PC-9 (cell line): ENCODE measurements at regions of chr20 and their contacts with region 1.

Region 1: DNA sequence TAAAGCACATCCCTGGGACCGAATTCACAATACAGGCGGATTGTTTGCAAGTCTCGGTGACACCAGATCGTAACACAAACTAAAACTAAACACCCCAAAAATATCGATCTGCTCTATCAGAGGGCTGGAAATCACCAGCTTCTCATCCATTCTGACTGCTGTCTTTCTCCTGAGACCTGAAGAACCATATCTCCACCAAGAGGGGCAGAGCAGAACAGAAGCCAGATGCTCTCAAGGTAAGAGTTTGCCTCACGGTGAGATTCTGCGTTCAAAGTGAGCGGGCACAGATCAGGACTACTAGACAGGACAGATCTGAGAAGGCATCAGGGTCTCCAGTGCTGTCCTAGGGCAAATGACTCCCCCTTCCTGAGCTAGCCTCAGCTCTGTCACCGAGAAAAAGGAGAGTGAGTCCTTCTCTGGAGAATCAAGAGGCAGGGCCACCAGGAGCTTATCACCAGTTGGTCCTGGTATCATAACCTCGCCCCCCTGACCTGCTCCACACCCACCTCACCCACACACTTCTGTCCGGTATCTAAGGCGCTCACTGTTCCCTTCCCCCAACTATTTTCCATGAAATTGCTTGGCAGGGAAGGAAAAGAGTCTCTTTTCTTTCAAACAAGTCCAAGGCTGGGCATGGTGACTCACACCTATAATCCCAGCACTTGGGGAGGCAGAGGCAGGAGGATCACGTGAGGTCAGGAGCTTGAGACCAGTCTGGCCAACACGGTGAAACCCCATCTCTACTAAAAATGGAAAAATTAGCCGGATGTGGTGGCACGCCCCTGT is 77.7 kb downstream of the ZMYND8 start:
- DNase-seq: no peak
- H3K4me3 ChIP-seq: no peak overlapping the region
- H3K27ac ChIP-seq: no peak overlapping the region
- H3K4me1 ChIP-seq: peaks cover 39% of the 10 kb centered on the region
- H3K27me3 ChIP-seq: no peaks in the 10 kb centered on the region
- CTCF ChIP-seq: no peak

Region 2: DNA sequence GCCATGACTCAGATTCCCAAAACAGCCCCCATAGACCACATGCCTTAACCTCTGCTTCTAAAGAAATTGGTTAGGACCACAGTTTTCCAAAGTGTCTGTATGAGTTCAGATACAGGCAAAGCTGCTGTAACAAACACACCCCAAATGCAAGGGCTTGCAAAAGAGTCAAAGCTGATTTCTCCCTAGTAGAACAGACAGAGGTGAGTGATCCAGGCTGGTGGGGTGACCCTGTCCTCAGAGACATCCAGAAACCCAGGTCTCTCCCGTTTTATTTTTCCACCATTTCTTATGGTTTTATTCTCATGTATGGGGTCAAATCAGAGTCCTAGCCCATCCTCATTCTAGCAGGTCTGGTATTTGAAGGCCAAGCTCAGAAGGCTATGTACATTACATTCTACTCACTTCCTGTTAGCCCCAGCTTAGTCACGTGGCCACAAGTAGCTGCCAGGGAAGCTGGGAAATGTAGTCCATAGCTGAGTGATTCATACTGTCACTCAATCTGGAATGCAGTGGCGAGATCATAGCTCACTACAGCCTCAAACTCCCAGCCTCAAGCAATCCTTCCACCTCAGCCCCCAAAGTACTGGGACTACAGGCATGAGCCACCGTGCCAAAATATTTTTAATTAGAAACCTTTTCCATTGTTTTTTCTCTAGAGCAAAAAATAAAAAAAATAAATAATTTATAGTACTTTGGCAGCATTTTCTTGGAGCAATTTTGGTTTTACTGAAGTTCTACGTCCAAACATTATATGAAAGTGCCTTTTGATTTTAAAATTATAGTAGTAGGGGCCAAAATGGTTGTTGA is 97.5 kb before region 1 on chr20:
- CTCF ChIA-PET with region 1: no interaction called
- POLR2A ChIA-PET with region 1: interaction called, 11 read pairs
- intact Hi-C with region 1: no loop called
- DNase-seq: peak; percentile 36 to 79
- H3K4me3 ChIP-seq: no peak overlapping the region
- H3K27ac ChIP-seq: no peak overlapping the region
- H3K4me1 ChIP-seq: no peaks in the 10 kb centered on the region
- H3K27me3 ChIP-seq: no peaks in the 10 kb centered on the region
- CTCF ChIP-seq: no peak

Region 3: GRCh38 chr20:47305667-47306066 is 26.9 kb after region 1 on chr20:
- CTCF ChIA-PET with region 1: no interaction called
- POLR2A ChIA-PET with region 1: no interaction called
- intact Hi-C with region 1: no loop called
- DNase-seq: no peak
- H3K4me3 ChIP-seq: no peak overlapping the region
- H3K27ac ChIP-seq: no peak overlapping the region
- H3K4me1 ChIP-seq: no peaks in the 10 kb centered on the region
- H3K27me3 ChIP-seq: no peaks in the 10 kb centered on the region
- CTCF ChIP-seq: no peak

Region 4: GRCh38 chr20:47334022-47334551 is 55.3 kb after region 1 on chr20:
- CTCF ChIA-PET with region 1: no interaction called
- POLR2A ChIA-PET with region 1: no interaction called
- intact Hi-C with region 1: loop called (anchors 1 kb)
- DNase-seq: peak; percentile 50 to 97
- H3K4me3 ChIP-seq: peak overlapping the region; percentile 33; the same call in 1 of the 2 replicates
- H3K27ac ChIP-seq: peak overlapping the region; percentile 69
- H3K4me1 ChIP-seq: peaks cover 67% of the 10 kb centered on the region
- H3K27me3 ChIP-seq: no peaks in the 10 kb centered on the region
- CTCF ChIP-seq: no peak